IMR-90 (cell line): ENCODE measurements at regions of chr17 and their contacts with region 1.

Region 1: GRCh38 chr17:60277258-60277657 is 114.7 kb downstream of the USP32 start:
- DNase-seq: no peak
- ATAC-seq: no peak
- H3K4me3 ChIP-seq: no peak overlapping the region
- H3K27ac ChIP-seq: no peak overlapping the region
- H3K4me1 ChIP-seq: no peaks in the 10 kb centered on the region; the same call in 1 of the 2 replicates
- H3K27me3 ChIP-seq: no peaks in the 10 kb centered on the region
- CTCF ChIP-seq: no peak
- POLR2A ChIP-seq: no peak
- RAD21 ChIP-seq: no peak

Region 2: DNA sequence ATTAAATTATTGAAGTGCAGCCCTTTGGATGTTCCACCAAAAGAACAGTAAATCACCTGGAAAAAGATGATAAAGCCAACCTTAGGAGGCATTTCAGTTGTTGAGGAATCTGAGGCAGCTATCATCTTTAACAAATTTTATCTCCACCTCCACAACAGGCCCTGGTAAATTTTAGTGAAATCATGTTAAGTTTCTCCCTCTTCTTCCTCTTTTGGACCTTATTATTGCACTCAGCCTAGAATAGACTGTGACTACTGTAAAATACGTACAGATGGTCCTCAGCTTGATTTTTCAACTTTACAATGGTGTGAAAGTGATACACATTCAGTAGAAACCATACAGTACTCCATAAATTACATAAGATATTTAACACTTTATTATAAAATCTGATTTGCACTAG is 24.4 kb after region 1 on chr17:
- CTCF ChIA-PET with region 1: no interaction called
- POLR2A ChIA-PET with region 1: no interaction called
- dilution Hi-C with region 1: no loop called
- in situ Hi-C with region 1: no loop called
- intact Hi-C with region 1: no loop called
- DNase-seq: no peak
- ATAC-seq: no peak
- H3K4me3 ChIP-seq: no peak overlapping the region
- H3K27ac ChIP-seq: no peak overlapping the region
- H3K4me1 ChIP-seq: no peaks in the 10 kb centered on the region
- H3K27me3 ChIP-seq: no peaks in the 10 kb centered on the region
- CTCF ChIP-seq: no peak
- POLR2A ChIP-seq: no peak
- RAD21 ChIP-seq: no peak

Region 3: DNA sequence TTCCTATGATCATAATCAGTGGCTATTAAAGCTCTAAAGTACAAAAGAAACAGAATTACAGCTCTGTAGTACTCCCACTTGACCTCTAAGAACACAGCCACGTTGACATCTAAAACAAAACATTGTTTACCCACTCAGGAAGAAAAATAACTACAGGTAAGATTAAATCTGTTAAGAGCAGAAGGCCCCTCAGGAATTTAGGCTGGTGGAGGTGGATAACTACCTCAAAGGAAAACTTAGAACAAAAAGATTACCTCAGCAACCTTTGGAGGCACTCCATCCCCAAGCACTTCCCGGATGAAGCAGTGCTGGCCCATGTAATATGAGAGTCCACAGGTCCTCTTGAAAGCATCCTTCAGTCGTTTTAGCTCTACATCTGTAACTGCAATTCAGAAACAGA is 68.0 kb after region 1 on chr17:
- CTCF ChIA-PET with region 1: no interaction called
- POLR2A ChIA-PET with region 1: no interaction called
- dilution Hi-C with region 1: no loop called
- in situ Hi-C with region 1: no loop called
- intact Hi-C with region 1: no loop called
- DNase-seq: no peak
- ATAC-seq: no peak
- H3K4me3 ChIP-seq: no peak overlapping the region
- H3K27ac ChIP-seq: no peak overlapping the region
- H3K4me1 ChIP-seq: no peaks in the 10 kb centered on the region
- H3K27me3 ChIP-seq: no peaks in the 10 kb centered on the region
- CTCF ChIP-seq: no peak
- POLR2A ChIP-seq: no peak
- RAD21 ChIP-seq: no peak

Region 4: DNA sequence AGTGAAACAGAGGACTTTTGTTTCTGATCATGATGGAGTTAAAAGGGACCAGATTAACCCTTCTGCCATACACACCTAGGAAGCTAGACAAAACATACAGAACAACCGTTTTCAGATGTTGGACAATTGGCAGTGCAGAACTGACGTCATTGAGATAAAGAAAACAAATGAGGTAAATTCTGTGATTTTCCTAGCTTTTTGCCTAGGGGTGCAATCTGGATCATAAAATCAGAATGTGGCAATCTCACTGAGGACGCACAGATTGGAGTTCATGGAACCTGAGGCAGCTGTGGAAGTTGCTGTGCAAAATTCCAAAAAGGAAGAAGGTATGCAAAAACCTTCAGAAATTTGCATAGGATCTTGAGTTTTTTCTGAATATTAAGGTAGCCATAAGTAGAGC is 129.6 kb after region 1 on chr17:
- CTCF ChIA-PET with region 1: no interaction called
- POLR2A ChIA-PET with region 1: interaction called, 11 read pairs
- dilution Hi-C with region 1: no loop called
- in situ Hi-C with region 1: no loop called
- intact Hi-C with region 1: no loop called
- DNase-seq: no peak
- ATAC-seq: no peak
- H3K4me3 ChIP-seq: no peak overlapping the region
- H3K27ac ChIP-seq: no peak overlapping the region
- H3K4me1 ChIP-seq: 0 out of 2 replicates have a peak, but pooled peaks cover 2% of the 10 kb centered on the region
- H3K27me3 ChIP-seq: peaks cover 3% of the 10 kb centered on the region; the same call in 1 of the 2 replicates
- CTCF ChIP-seq: no peak
- POLR2A ChIP-seq: no peak
- RAD21 ChIP-seq: no peak